Tibial artery (tissue), 4 donors: ENCODE measurements at regions of chr1 and their contacts with region 1.

Region 1: GRCh38 chr1:228405987-228406265 is 709 bp downstream of the TRIM11 start:
- DNase-seq: no peak
- H3K4me3 ChIP-seq: peak overlapping the region; percentile 75 to 88
- H3K27ac ChIP-seq: peak overlapping the region; percentile 78 to 80
- H3K4me1 ChIP-seq: peaks cover 5 to 55% (median 34%) of the 10 kb centered on the region in 4 donors
- H3K27me3 ChIP-seq: no peaks in the 10 kb centered on the region
- CTCF ChIP-seq: no peak

Region 2: DNA sequence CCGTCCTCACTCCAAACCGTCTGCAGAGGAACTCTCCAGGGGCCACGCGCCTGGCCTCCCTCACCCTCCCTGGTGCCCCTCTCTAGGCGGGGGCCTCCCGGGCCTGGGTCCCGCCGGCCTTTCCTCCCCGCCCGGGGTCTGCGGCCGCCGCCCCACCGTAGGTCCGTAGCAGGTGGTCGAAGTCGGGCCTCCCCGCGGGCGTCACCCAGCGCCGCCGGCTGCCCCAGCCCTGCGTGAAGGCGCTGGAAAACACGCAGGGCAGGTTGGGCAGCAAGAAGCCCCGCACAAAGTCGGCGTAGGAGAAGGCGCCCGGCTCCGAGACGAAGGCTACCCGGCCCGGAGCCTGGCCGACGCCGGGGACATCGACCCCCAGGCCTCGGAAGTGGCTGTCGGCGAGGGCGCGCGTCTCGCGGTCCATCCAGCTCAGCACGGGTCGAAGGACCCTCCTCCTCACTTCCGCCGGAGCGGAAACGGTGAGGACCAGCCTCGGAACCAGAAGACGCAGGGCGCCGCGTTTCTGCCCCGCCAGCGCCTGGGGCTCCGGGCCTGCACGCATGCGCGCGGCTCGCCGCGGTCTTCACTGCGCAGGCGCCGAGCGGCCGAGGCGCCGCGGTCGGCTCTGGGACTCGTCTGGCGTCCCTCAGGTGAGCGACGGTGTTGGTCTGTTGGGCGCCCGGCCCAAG is 670.9 kb before region 1 on chr1 and contains the starts of genes JMJD4 and SNAP47:
- intact Hi-C with region 1: loop called (anchors 10 kb)
- DNase-seq: peak; percentile 89 to 94
- H3K4me3 ChIP-seq: peak within 1 kb of the TSS; percentile 80 to 83
- H3K27ac ChIP-seq: peak within 1 kb of the TSS; percentile 87 to 88
- H3K4me1 ChIP-seq: peaks cover 0 to 42% (median 34%) of the 10 kb centered on the region in 4 donors
- H3K27me3 ChIP-seq: no peaks in the 10 kb centered on the region
- CTCF ChIP-seq: no peak

Region 3: GRCh38 chr1:228212966-228213844 is 192.7 kb before region 1 on chr1:
- intact Hi-C with region 1: loop called (anchors 10 kb)
- DNase-seq: peak; percentile 63 to 90
- H3K4me3 ChIP-seq: peak overlapping the region; percentile 41 to 49
- H3K27ac ChIP-seq: no peak overlapping the region
- H3K4me1 ChIP-seq: peaks cover 0 to 20% (median 18%) of the 10 kb centered on the region in 4 donors
- H3K27me3 ChIP-seq: peaks cover 0 to 53% of the 10 kb centered on the region in 2 donors
- CTCF ChIP-seq: peak; percentile 45 to 52

Region 4: GRCh38 chr1:228486596-228487335 is 80.8 kb after region 1 on chr1:
- intact Hi-C with region 1: loop called (anchors 5 kb)
- DNase-seq: peak; percentile 56 to 87
- H3K4me3 ChIP-seq: peak overlapping the region; percentile 71 to 80
- H3K27ac ChIP-seq: peak overlapping the region; percentile 90 to 98
- H3K4me1 ChIP-seq: peaks cover 0 to 43% (median 32%) of the 10 kb centered on the region in 4 donors
- H3K27me3 ChIP-seq: no peaks in the 10 kb centered on the region
- CTCF ChIP-seq: peak in 1 of 2 experiments; percentile 15